Panc1 (cell line): ENCODE measurements at regions of chr1 and their contacts with region 1.

Region 1: GRCh38 chr1:35564037-35564883 is 6.7 kb downstream of the NCDN start:
- DNase-seq: no peak
- ATAC-seq: peak; percentile 70
- H3K4me3 ChIP-seq: no peak overlapping the region
- H3K27ac ChIP-seq: no peak overlapping the region; the same call in 1 of the 2 replicates
- H3K4me1 ChIP-seq: peaks cover 1% of the 10 kb centered on the region
- H3K27me3 ChIP-seq: no peaks in the 10 kb centered on the region
- CTCF ChIP-seq: peak; percentile 94

Region 2: GRCh38 chr1:35377555-35377954 is 186.7 kb before region 1 on chr1:
- CTCF ChIA-PET with region 1: no interaction called
- POLR2A ChIA-PET with region 1: no interaction called
- in situ Hi-C with region 1: no loop called
- intact Hi-C with region 1: no loop called
- DNase-seq: no peak
- ATAC-seq: no peak
- H3K4me3 ChIP-seq: no peak overlapping the region
- H3K27ac ChIP-seq: no peak overlapping the region
- H3K4me1 ChIP-seq: no peaks in the 10 kb centered on the region
- H3K27me3 ChIP-seq: no peaks in the 10 kb centered on the region
- CTCF ChIP-seq: no peak

Region 3: DNA sequence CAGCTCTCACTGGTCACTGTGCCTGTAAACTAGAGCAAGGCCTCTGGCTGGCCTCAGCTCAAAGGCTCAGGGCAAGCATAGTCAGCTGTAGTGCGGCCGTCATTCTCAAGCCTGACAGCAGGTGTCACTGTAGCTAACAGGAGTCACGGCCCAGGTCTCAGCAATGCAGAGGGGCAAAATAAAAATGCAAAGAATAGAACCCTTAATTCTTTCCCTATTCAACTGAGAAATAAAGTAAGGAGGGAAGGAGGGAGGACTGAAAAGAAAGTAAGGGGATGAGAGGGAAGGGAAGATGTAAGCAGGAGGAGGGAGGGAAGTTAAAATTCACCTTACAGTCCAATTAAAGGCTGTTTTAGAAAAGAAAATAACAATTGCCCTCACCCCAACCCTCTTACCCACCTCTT is 113.1 kb before region 1 on chr1:
- CTCF ChIA-PET with region 1: interaction called, 45 read pairs
- POLR2A ChIA-PET with region 1: no interaction called
- in situ Hi-C with region 1: no loop called
- intact Hi-C with region 1: loop called (anchors 1 kb)
- DNase-seq: peak; percentile 46
- ATAC-seq: peak; percentile 96
- H3K4me3 ChIP-seq: no peak overlapping the region
- H3K27ac ChIP-seq: peak overlapping the region; percentile 64; the same call in 1 of the 2 replicates
- H3K4me1 ChIP-seq: peaks cover 20% of the 10 kb centered on the region
- H3K27me3 ChIP-seq: no peaks in the 10 kb centered on the region
- CTCF ChIP-seq: peak; percentile 94

Region 4: GRCh38 chr1:35544978-35545377 is 19.3 kb before region 1 on chr1:
- CTCF ChIA-PET with region 1: no interaction called
- POLR2A ChIA-PET with region 1: no interaction called
- in situ Hi-C with region 1: no loop called
- intact Hi-C with region 1: no loop called
- DNase-seq: no peak
- ATAC-seq: peak; percentile 69; the same call in 1 of the 2 replicates
- H3K4me3 ChIP-seq: no peak overlapping the region
- H3K27ac ChIP-seq: no peak overlapping the region
- H3K4me1 ChIP-seq: peaks cover 4% of the 10 kb centered on the region; the same call in 1 of the 2 replicates
- H3K27me3 ChIP-seq: no peaks in the 10 kb centered on the region
- CTCF ChIP-seq: peak; percentile 39

Region 5: GRCh38 chr1:35622510-35623178 is 58.4 kb after region 1 on chr1:
- CTCF ChIA-PET with region 1: no interaction called
- POLR2A ChIA-PET with region 1: no interaction called
- in situ Hi-C with region 1: no loop called
- intact Hi-C with region 1: no loop called
- DNase-seq: no peak
- ATAC-seq: no peak
- H3K4me3 ChIP-seq: no peak overlapping the region
- H3K27ac ChIP-seq: no peak overlapping the region
- H3K4me1 ChIP-seq: no peaks in the 10 kb centered on the region
- H3K27me3 ChIP-seq: no peaks in the 10 kb centered on the region
- CTCF ChIP-seq: no peak

Region 6: DNA sequence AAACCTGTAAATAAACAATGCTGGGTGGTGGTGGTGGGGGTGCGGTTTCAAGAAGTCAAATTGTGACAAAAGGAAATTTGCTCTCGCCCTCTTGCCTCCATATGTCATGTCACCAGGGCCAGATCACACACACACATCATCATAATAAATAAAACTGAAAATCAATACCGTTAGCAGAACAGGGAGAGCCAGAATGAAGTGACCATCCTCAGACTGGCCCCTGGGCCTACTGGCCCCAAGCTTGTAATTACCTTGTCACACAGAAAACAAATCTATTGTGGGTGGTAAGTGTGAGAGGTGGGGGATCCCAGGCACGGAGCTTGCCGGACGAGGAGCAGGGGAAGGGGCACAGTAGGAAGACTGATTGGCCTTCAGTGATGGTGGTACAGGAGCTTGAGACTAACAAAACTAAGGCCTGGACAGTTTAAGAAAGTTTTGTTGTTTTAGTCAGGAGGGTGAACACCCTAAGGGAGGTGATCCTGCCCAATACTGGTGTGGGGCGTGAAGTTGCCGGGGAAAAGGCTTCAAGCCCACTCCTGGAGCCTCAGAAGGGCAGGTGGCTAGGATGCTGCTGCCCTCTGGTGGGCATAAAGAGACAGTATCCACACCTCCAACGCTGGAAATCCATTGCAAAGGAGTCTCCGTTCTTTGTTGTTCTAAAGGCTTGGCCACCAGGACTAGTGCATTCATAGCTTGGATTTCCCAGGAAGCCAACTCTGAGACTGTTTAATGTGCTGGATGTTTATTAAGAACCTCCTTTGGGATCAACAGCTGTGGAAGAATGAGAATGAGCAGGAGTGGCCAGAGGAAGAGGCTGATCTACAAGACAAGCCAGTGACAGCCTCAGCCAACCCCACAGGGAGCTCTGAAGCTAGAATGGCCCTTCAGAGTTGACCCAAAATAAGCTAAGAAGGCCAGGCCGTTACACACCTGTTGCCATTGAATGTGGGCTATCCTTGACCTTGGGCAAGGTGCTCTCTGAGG is 162.5 kb after region 1 on chr1:
- CTCF ChIA-PET with region 1: interaction called, 4 read pairs
- POLR2A ChIA-PET with region 1: no interaction called
- in situ Hi-C with region 1: no loop called
- intact Hi-C with region 1: loop called (anchors 1 kb)
- DNase-seq: no peak
- ATAC-seq: peak; percentile 96
- H3K4me3 ChIP-seq: no peak overlapping the region
- H3K27ac ChIP-seq: no peak overlapping the region
- H3K4me1 ChIP-seq: no peaks in the 10 kb centered on the region
- H3K27me3 ChIP-seq: no peaks in the 10 kb centered on the region
- CTCF ChIP-seq: peak; percentile 93

Region 7: GRCh38 chr1:35769759-35770446 is 205.6 kb after region 1 on chr1 and contains the start of gene CLSPN:
- CTCF ChIA-PET with region 1: no interaction called
- POLR2A ChIA-PET with region 1: no interaction called
- in situ Hi-C with region 1: no loop called
- intact Hi-C with region 1: loop called (anchors 2 kb)
- DNase-seq: peak; percentile 80
- ATAC-seq: peak; percentile 98
- H3K4me3 ChIP-seq: peak within 1 kb of the TSS; percentile 73 to 87
- H3K27ac ChIP-seq: peak within 1 kb of the TSS; percentile 88
- H3K4me1 ChIP-seq: peaks cover 10% of the 10 kb centered on the region
- H3K27me3 ChIP-seq: no peaks in the 10 kb centered on the region
- CTCF ChIP-seq: no peak
- total RNA-seq, gene CLSPN: 52.1 TPM

Region 8: DNA sequence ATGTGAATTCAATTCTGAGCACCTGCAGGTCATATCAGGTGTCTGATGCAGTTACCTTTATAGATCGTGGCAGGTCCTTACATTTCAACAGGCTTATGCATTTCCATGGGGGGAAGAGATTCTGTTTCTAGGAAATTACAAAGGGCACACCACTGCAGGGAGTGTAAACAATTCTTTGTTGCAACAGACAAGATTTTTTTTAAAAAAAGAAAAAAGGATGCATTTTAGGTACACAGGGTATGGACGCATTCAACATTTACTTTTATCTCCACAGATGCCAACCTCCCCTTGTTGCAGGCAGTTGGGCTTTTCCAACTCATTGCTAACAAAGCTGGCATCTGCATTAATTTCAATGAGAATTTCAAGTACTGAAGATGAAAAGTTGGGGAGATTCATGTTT is 506.1 kb after region 1 on chr1:
- CTCF ChIA-PET with region 1: no interaction called
- POLR2A ChIA-PET with region 1: no interaction called
- in situ Hi-C with region 1: no loop called
- intact Hi-C with region 1: no loop called
- DNase-seq: no peak
- ATAC-seq: no peak
- H3K4me3 ChIP-seq: no peak overlapping the region
- H3K27ac ChIP-seq: no peak overlapping the region
- H3K4me1 ChIP-seq: no peaks in the 10 kb centered on the region
- H3K27me3 ChIP-seq: no peaks in the 10 kb centered on the region
- CTCF ChIP-seq: no peak